ENCODE measurements at regions of chr19 and their contacts with region 1.

Region 1: GRCh38 chr19:55437410-55438075 is 5.6 kb downstream of the SHISA7 start:
- DNase-seq: no peak

Region 2: GRCh38 chr19:55132453-55133129 is 305.0 kb before region 1 on chr19:
- intact Hi-C with region 1: loop called in 1 of 2 experiments (anchors 10 kb)
- DNase-seq: no peak

Region 3: DNA sequence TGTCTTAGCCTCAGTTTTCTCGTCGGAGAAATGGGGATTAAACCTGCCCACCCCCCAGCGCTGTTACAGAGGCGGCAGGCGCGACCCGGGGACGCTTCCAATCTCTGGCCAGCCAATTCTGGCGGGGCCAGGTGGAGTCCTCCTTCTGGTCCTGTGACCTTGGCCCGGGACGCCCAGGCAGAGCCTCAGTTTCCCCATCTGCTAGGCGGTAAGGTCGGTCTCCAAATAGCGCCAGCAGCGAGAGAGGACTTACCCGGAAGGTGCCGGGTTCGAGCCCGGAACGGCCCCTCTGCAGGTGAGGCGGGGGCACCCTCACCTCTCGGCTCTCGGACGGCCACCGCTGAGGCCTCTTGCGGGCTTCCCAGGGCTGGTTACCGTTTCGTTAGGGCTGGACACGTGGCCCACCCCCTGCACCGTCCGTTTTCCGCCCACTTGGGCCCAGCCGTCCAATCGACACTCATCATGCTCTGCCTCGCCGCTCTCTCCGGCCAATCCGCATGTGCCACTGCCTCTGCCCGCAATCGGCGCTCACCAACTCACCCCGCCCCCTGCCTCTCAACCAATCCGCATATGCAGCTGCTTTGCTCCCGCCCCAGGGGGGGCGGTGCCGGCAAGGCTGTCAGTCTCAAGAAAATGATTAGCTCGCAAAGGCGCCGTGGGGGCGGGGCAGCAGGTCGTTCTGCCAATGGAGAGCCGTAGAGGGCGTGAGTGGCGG is 23.9 kb after region 1 on chr19 and contains the start of gene ISOC2:
- intact Hi-C with region 1: no loop called
- DNase-seq: peak; percentile 100
- total RNA-seq, gene ISOC2: 23.1 to 25.1 TPM

Region 4: GRCh38 chr19:55476100-55476775 is 38.7 kb after region 1 on chr19 and contains the start of gene ZNF628:
- intact Hi-C with region 1: loop called in 1 of 2 experiments (anchors 1 kb)
- DNase-seq: peak; percentile 100
- total RNA-seq, gene ZNF628: 5.7 to 7.9 TPM